CD4-positive, alpha-beta memory T cell (primary cell): ENCODE measurements at regions of chr16 and their contacts with region 1.

Region 1: DNA sequence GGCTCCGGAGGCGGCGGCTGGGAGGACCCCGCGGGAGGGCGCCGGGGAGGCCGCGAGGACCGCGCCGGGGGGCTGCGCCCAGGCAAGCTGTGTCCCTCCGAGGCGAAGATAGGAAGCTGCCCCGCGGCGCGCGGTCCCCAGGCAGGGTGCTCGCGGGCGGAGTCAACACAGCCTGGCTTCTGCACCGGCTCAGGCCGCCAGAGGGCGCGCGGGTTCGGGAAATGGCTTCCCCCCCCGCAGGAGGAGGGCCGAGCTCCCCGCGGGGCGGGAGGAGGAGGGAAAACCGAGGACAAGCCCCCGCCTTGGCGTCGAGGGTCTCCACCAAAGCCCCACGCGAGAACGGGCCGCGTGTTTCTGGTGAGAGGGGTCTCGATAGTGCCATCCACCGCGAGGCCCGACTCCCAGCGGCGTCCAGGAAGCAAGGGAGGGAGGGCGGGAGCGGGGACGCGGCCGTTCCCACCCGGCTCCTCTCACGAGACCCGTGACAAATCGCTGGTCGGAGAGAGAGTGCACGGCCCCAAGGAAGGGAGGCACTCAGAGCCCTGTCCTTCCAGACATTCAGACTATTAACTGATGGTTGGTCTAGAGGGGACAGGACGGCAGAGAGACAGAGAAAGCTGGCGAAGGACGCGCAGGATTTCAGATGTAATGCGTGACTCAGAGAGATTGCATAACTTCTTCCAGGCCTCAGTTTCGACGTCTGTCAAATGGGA is 64.4 kb upstream of the DNAJA2 start:
- DNase-seq: peak; percentile 81 to 89 (median 85)
- H3K4me3 ChIP-seq: peak overlapping the region; percentile 61 to 67
- H3K4me3 Mint-ChIP-seq: peak overlapping the region; percentile 68 to 85 (median 80)
- H3K27ac ChIP-seq: peak overlapping the region; percentile 45
- H3K27ac Mint-ChIP-seq: peak overlapping the region in 4 of 7 donors; percentile 8 to 71 (median 42)
- H3K4me1 ChIP-seq: no peaks in the 10 kb centered on the region
- H3K4me1 Mint-ChIP-seq: peaks cover 0 to 8% (median 5%) of the 10 kb centered on the region in 4 donors
- H3K27me3 ChIP-seq: no peaks in the 10 kb centered on the region
- H3K27me3 Mint-ChIP-seq: no peaks in the 10 kb centered on the region

Region 2: DNA sequence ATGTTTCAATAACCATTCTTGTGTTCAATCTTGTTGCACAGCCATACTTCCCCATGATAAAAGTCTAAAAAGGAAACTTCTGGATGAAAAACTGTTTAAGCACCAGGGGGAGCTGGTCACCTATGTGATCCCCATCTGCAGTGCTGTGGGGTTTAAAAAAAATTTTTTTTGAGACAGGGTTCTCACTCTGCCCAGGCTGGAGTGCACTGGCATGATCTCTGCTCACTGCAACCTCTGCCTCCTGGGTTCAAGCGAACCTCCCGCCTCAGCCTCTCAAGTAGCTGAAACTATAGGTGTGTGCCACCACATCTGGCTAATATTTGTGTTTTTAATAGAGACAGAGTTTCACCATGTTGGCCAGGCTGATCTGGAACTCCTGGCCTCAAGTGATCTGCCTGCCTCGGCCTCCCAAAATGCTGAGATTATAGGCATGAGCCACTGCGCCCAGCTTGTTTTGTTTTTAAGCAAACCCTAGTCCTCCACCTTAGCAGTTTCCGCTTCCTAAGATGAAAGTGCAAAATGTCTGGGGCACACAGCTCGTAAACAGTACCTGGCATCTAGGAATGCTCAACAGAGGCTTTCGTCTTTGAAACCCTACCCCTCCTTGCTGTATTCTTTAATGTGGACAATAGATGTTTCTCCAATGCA is 89.9 kb before region 1 on chr16:
- CTCF ChIA-PET with region 1: interaction called, 6 read pairs
- POLR2A ChIA-PET with region 1: interaction called, 3 read pairs
- intact Hi-C with region 1: loop called (anchors 1 kb)
- DNase-seq: peak in 4 of 5 donors; percentile 47 to 54 (median 50)
- H3K4me3 ChIP-seq: no peak overlapping the region
- H3K4me3 Mint-ChIP-seq: peak overlapping the region in 2 of 8 donors; percentile 4 to 46
- H3K27ac ChIP-seq: no peak overlapping the region
- H3K27ac Mint-ChIP-seq: peak overlapping the region in 6 of 7 donors; percentile 29 to 68 (median 52)
- H3K4me1 ChIP-seq: peaks cover 15% of the 10 kb centered on the region
- H3K4me1 Mint-ChIP-seq: peaks cover 8 to 27% (median 15%) of the 10 kb centered on the region in 4 donors
- H3K27me3 ChIP-seq: no peaks in the 10 kb centered on the region
- H3K27me3 Mint-ChIP-seq: no peaks in the 10 kb centered on the region

Region 3: GRCh38 chr16:47018223-47018891 is 19.5 kb before region 1 on chr16:
- CTCF ChIA-PET with region 1: interaction called, 16 read pairs
- POLR2A ChIA-PET with region 1: no interaction called
- intact Hi-C with region 1: no loop called
- DNase-seq: peak in 4 of 5 donors; percentile 24 to 36 (median 33)
- H3K4me3 ChIP-seq: no peak overlapping the region
- H3K4me3 Mint-ChIP-seq: peak overlapping the region in 1 of 8 donors; percentile 20
- H3K27ac ChIP-seq: no peak overlapping the region
- H3K27ac Mint-ChIP-seq: peak overlapping the region in 2 of 7 donors; percentile 10 to 17
- H3K4me1 ChIP-seq: peaks cover 11% of the 10 kb centered on the region
- H3K4me1 Mint-ChIP-seq: peaks cover 12 to 23% (median 19%) of the 10 kb centered on the region in 4 donors
- H3K27me3 ChIP-seq: no peaks in the 10 kb centered on the region
- H3K27me3 Mint-ChIP-seq: no peaks in the 10 kb centered on the region

Region 4: DNA sequence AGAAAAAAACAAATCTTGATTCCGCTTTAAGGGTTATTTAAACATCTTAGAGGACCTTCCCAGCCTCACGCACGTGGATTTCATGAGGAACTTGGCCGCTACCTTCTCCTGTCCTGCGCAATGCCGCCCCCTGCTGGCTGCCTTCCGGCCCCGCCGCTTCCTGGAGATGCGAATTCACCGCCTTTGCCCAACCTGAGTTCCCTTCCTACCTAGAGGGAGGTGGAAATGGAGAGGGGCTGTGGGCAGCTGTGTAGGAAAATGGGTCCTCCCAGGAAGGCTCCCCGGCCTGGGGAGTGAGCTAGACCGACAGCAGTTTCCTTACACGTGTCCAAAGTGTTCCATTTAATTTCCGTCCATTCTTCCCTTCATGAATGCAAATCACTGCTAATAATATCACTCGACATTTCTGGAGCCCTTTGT is 1118.9 kb after region 1 on chr16:
- CTCF ChIA-PET with region 1: interaction called, 28 read pairs
- POLR2A ChIA-PET with region 1: no interaction called
- intact Hi-C with region 1: loop called (anchors 1 kb)
- DNase-seq: peak; percentile 69 to 77 (median 72)
- H3K4me3 ChIP-seq: no peak overlapping the region
- H3K4me3 Mint-ChIP-seq: peak overlapping the region in 1 of 8 donors; percentile 44
- H3K27ac ChIP-seq: no peak overlapping the region
- H3K27ac Mint-ChIP-seq: no peak overlapping the region
- H3K4me1 ChIP-seq: peaks cover 4% of the 10 kb centered on the region
- H3K4me1 Mint-ChIP-seq: peaks cover 0 to 4% (median 0%) of the 10 kb centered on the region in 4 donors
- H3K27me3 ChIP-seq: no peaks in the 10 kb centered on the region
- H3K27me3 Mint-ChIP-seq: peaks cover 2 to 5% of the 10 kb centered on the region in 2 donors